Heart left ventricle (tissue), 16 donors: ENCODE measurements at regions of chr12 and their contacts with region 1.

Region 1: DNA sequence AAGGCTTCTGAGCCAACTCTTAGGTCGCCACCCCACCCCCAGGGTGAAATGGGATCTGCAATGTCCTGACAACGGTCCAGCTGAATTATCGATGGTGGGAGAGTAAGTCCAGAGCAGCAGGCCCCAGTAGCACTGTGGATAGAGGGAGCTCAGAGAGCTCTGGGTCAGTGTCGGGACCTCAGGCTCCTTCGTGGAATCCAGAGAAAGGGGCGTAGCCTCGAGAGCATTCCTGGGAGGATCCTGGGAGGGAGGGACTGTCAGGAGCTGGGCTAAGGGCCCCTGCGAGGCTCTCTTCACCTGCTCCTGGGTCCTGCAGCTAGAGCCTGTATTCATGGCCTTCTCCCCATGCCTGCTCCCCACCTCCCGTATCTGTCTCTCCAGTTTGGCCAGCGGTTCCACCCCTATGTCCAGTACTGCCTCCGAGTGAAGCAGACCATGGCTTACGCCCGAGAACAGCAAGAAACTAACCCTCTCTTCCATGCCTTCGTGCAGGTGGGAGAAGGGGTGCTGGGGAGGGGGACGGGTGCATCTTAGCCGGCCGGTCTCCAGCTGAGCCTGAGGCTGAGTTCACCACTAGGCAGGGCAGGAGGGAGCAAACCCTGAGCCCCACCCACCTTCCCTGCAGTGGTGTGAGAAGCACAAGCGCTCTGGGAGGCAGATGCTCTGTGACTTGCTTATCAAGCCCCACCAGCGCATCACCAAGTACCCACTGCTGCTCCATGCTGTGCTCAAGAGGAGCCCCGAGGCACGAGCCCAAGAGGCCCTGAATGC is 6.6 kb downstream of the PLEKHG6 start:
- DNase-seq: no peak
- ATAC-seq: no peak
- H3K4me3 ChIP-seq: no peak overlapping the region
- H3K27ac ChIP-seq: no peak overlapping the region
- H3K4me1 ChIP-seq: peaks cover 0 to 9% (median 4%) of the 10 kb centered on the region in 12 donors
- H3K27me3 ChIP-seq: no peaks in the 10 kb centered on the region
- CTCF ChIP-seq: no peak
- POLR2A ChIP-seq: no peak

Region 2: DNA sequence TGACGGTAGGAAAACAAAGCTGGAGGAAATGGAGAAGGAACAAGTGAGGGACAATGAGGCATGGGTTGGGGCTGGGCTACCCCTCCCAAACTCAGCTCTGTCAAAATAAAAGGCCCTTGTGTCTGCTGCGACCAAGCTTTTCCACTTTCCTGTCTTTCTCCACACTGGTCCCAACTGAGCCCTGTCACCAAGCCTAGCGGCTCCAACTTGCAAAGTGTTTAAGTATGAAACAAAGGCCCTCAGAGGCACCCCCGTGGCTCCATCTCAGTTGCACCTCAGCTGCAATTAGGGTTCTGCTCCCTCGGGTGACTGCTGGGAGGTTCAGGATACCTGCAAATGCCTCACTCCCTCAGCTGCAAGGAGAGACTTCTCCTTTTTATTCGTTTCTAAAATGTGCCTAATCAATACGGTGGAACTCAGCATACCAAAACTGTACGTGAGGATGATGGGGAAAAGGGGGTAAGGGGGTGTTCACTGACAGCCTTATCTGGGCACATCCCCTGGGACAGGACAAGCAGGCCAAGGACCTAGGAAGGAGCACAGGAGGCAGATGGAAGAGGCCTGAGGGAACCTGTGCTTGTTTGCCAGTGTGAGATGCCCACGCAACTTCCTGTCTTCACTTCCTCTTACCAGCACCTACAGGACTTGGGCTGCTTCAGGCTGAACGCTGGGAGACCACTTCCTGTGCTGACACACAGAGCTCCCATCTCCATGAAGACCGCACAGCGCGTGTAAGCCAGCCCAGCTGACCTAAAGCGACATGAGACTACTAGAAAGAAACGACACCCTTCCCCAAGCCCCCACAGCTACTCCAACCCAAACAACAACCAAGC is 144.5 kb after region 1 on chr12:
- intact Hi-C with region 1: loop called in 2 of 10 experiments (anchors 5 to 10 kb)
- DNase-seq: peak; percentile 44 to 71 (median 48)
- ATAC-seq: peak in 3 of 4 donors; percentile 15 to 64 (median 23)
- H3K4me3 ChIP-seq: peak overlapping the region in 1 of 12 donors; percentile 29
- H3K27ac ChIP-seq: peak overlapping the region in 10 of 12 donors; percentile 24 to 84 (median 58)
- H3K4me1 ChIP-seq: peaks cover 0 to 72% (median 15%) of the 10 kb centered on the region in 12 donors
- H3K27me3 ChIP-seq: no peaks in the 10 kb centered on the region
- CTCF ChIP-seq: no peak
- POLR2A ChIP-seq: no peak